Gastrocnemius medialis (tissue), 4 donors: ENCODE measurements at regions of chr19 and their contacts with region 1.

Region 1: DNA sequence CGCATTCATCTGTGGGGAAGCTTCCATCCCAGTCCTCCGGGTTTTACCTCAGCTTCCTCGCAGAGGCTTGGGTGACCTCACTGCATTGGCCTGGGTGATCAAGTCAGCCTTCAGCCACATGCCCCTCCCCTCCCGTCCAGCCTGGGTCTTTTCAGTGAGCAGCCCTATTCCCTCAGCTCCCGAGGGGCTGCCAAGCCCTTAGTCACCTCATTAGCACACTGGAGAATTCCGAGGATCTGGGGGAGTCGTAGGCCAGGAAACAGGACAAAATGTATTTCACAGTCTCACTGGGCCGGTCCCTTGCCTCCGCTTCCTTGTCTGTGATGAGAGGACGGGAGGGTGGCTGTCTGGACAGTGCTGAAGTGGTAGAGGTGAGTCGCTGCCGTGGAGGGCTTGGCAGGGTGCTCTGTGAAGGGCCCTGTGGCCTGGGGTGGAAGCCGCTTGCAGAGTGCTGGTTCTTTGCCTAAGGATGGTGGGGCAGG is 19.9 kb downstream of the KDM4B start:
- DNase-seq: no peak
- ATAC-seq: peak; percentile 24 to 52
- H3K4me3 ChIP-seq: no peak overlapping the region
- H3K27ac ChIP-seq: peak overlapping the region; percentile 2 to 58 (median 22)
- H3K4me1 ChIP-seq: peaks cover 48 to 57% of the 10 kb centered on the region in 2 donors
- H3K27me3 ChIP-seq: no peaks in the 10 kb centered on the region
- CTCF ChIP-seq: no peak
- POLR2A ChIP-seq: no peak

Region 2: DNA sequence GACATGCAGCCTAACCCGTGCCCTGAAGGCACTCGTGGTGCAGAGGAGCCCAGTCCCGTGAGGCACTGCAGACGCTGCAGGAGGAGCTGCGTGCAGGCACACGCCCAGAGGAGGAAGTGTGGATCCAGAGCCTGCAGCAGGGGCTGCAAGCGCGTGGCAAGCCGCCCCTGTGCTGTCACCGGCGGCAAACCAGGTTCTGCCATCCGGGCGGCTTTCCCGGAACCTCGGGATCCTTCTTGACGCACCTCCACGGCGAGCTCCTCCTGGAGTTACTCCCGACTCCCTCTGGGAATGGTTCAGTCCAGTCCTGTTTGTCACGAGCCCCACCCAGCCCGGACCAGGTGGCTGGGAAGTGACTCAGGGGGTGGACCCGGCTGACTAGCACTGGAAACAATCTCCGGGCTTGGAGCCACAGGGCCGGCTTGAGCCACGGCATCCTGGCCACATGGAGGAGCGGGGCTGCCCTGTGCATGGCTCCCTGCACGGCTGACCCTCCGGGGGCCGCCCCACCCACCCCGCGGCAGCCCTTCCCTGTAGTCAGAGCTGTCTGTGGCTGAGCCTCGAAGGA is 275.3 kb before region 1 on chr19:
- in situ Hi-C with region 1: no loop called
- intact Hi-C with region 1: no loop called
- DNase-seq: peak; percentile 95 to 99
- ATAC-seq: peak; percentile 84 to 86
- H3K4me3 ChIP-seq: peak overlapping the region; percentile 7 to 41 (median 18)
- H3K27ac ChIP-seq: peak overlapping the region; percentile 89 to 100 (median 97)
- H3K4me1 ChIP-seq: peaks cover 56 to 63% of the 10 kb centered on the region in 2 donors
- H3K27me3 ChIP-seq: no peaks in the 10 kb centered on the region
- CTCF ChIP-seq: peak in 2 of 5 experiments; percentile 16 to 28
- POLR2A ChIP-seq: peak; percentile 66 to 74

Region 3: DNA sequence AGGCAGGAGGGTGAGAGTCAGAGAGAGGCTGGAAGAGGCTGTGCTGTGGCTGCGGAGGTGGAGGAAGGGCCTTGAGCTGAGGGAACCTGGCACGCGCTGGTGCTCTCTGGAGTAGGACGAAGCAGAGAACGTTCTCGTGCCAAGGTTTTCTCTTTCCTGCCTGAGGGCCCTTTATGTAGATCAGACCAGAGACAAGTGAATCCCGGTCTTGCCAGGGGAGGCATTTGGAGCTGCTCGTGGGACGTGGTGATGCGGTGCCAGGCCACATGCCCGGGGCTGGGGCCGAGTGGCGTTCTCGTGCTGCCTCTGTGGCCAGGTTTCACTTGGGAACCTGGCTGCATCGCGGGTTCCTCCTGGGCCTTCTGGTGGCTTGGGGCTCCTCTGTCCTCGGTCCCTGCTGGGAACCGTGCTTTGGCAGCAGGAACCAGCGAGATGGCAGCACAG is 34.3 kb after region 1 on chr19:
- in situ Hi-C with region 1: no loop called
- intact Hi-C with region 1: loop called (anchors 2 kb)
- DNase-seq: peak; percentile 41 to 74
- ATAC-seq: peak; percentile 69 to 75
- H3K4me3 ChIP-seq: peak overlapping the region in 1 of 4 donors; percentile 11
- H3K27ac ChIP-seq: peak overlapping the region; percentile 70 to 85 (median 77)
- H3K4me1 ChIP-seq: peaks cover 30 to 45% of the 10 kb centered on the region in 2 donors
- H3K27me3 ChIP-seq: no peaks in the 10 kb centered on the region
- CTCF ChIP-seq: no peak
- POLR2A ChIP-seq: no peak